H1 (cell line): ENCODE measurements at regions of chr14 and their contacts with region 1.

Region 1: DNA sequence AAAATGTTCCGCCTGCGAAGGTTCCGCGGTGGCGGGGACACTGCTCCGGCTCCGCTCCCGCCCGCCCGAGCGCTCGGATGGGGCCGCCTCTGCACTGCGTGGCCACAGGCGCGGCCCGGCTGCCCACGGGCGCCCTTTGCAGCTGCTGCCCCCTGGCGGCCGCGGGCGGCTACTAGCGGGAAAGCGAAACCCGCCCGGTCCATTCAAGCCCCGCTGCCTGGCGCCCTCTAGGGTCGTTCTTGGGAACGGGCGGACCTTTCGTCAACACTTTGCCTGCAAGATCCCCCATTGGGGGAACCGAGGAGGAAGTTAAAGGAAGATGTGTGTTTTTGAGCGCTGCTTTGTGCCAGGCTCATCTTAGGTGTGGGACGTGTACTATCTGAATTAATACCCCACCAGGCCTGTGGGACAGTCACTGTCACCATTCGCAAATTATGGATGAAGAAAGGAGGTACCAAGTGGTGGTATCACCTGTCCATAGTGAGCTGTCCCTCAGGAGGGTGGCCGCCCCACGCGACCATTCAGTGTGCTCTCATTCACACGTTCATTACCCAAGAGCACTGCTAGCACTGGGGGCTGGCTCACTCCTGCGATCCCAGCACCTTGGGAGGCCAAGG is 19.4 kb downstream of the GPR132 start:
- DNase-seq: peak in 1 of 2 experiments; percentile 98
- H3K4me3 ChIP-seq: no peak overlapping the region
- H3K27ac ChIP-seq: no peak overlapping the region
- H3K4me1 ChIP-seq: peaks cover 0 to 2% (median 0%) of the 10 kb centered on the region in 4 experiments; a peak in 1 of 7 replicates
- H3K27me3 ChIP-seq: peaks cover 0 to 8% (median 7%) of the 10 kb centered on the region in 4 experiments; a peak in 4 of 7 replicates
- CTCF ChIP-seq: peak; percentile 99 to 100 (median 99)
- EP300 ChIP-seq: peak in 1 of 2 experiments; percentile 39; a peak in 1 of 3 replicates
- POLR2A ChIP-seq: no peak
- RAD21 ChIP-seq: peak; percentile 89 to 98

Region 2: DNA sequence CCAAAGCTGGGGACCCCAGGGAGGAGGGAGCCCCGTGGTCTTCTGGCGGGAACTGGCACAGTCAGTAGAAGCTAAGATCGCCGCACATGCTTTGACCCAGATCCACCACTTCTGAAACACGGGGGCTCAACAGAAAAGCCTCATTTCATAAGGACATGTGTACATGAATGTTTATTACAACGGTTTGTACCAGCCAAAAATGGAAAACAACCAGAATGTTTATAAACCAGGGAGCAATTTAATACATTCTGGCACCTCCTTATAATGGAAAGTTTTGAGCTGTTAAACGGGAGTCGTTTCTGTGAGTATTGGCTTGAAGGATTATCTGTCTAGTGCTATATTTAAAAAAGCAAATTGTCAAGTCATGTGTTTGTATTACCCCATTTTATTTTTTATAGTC is 433.9 kb before region 1 on chr14:
- CTCF ChIA-PET with region 1: no interaction called
- POLR2A ChIA-PET with region 1: no interaction called
- DNase-seq: no peak
- H3K4me3 ChIP-seq: no peak overlapping the region
- H3K27ac ChIP-seq: no peak overlapping the region
- H3K4me1 ChIP-seq: no peaks in the 10 kb centered on the region
- H3K27me3 ChIP-seq: peaks cover 0 to 5% (median under 1%) of the 10 kb centered on the region in 4 experiments; a peak in 2 of 7 replicates
- CTCF ChIP-seq: no peak
- EP300 ChIP-seq: no peak
- POLR2A ChIP-seq: no peak
- RAD21 ChIP-seq: no peak

Region 3: DNA sequence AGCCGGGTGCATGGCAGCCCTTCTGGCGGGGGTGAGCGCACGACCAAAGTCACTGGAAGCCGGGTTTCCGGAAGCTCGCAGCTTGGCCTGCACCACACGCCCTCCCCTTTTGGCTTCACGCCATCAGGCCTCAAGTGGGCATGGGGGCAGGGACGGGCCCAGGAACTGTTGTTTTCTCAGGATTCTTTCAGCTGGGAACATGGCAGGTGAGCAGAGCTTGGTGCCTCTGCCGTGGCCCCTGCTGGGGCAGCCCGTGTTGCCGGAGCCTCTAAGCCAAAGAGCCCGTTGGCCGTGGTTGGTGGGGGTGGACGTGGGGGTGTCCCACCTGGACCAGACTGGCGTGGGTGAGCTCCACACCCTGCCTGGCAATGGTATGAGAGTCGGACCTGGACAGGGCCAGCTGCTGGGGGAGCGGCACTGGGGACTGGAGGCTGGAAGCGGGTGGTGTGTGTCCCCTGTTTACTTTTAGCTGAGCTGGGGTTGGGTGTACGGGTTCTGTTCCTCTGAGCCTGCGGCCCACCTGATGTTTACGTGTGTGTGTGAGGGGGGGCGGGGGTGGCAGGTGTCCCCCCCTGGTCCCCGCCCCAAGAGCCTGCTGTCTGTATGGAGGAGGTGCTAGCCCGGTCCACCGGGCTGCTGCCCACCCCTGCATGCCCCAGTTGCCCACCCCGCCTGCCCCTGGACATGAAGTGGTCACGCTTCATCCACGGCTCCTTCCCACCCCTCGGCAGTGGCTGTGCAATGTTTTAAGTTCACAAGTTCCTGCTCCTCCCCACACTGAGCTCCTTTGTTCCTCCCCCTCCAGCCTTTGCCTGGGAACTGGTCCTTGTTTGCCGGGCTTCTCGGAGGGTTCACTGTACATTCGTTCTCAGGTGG is 149.8 kb before region 1 on chr14:
- CTCF ChIA-PET with region 1: interaction called, 26 read pairs
- POLR2A ChIA-PET with region 1: no interaction called
- DNase-seq: peak in 1 of 2 experiments; percentile 46
- H3K4me3 ChIP-seq: no peak overlapping the region
- H3K27ac ChIP-seq: no peak overlapping the region
- H3K4me1 ChIP-seq: peaks cover 0 to 3% (median 0%) of the 10 kb centered on the region in 4 experiments; a peak in 1 of 7 replicates
- H3K27me3 ChIP-seq: no peaks in the 10 kb centered on the region
- CTCF ChIP-seq: no peak
- EP300 ChIP-seq: no peak
- POLR2A ChIP-seq: no peak
- RAD21 ChIP-seq: no peak

Region 4: GRCh38 chr14:104976198-104977007 is 69.4 kb before region 1 on chr14:
- CTCF ChIA-PET with region 1: interaction called, 161 read pairs
- POLR2A ChIA-PET with region 1: no interaction called
- DNase-seq: peak in 1 of 2 experiments; percentile 90
- H3K4me3 ChIP-seq: no peak overlapping the region
- H3K27ac ChIP-seq: no peak overlapping the region
- H3K4me1 ChIP-seq: peaks cover 0 to 11% (median 9%) of the 10 kb centered on the region in 4 experiments; a peak in 5 of 7 replicates
- H3K27me3 ChIP-seq: peaks cover 18 to 38% (median 31%) of the 10 kb centered on the region in 4 experiments
- CTCF ChIP-seq: peak in 2 of 3 experiments; percentile 85 to 93; a peak in 3 of 4 replicates
- EP300 ChIP-seq: no peak
- POLR2A ChIP-seq: no peak
- RAD21 ChIP-seq: peak; percentile 73 to 85

Region 5: GRCh38 chr14:104993808-104994591 is 51.8 kb before region 1 on chr14:
- CTCF ChIA-PET with region 1: interaction called, 22 read pairs
- POLR2A ChIA-PET with region 1: interaction called, 3 read pairs
- DNase-seq: no peak
- H3K4me3 ChIP-seq: no peak overlapping the region
- H3K27ac ChIP-seq: no peak overlapping the region
- H3K4me1 ChIP-seq: no peaks in the 10 kb centered on the region
- H3K27me3 ChIP-seq: 0 out of 7 replicates have a peak, but pooled peaks cover 0 to 2% (median 0%) of the 10 kb centered on the region in 4 experiments
- CTCF ChIP-seq: no peak
- EP300 ChIP-seq: no peak
- POLR2A ChIP-seq: no peak
- RAD21 ChIP-seq: no peak

Region 6: GRCh38 chr14:105034314-105035039 is 11.3 kb before region 1 on chr14:
- CTCF ChIA-PET with region 1: interaction called, 21 read pairs
- POLR2A ChIA-PET with region 1: no interaction called
- DNase-seq: no peak
- H3K4me3 ChIP-seq: peak overlapping the region in 1 of 4 experiments; percentile 59; a peak in 1 of 8 replicates
- H3K27ac ChIP-seq: no peak overlapping the region
- H3K4me1 ChIP-seq: peaks cover 0 to 2% (median 0%) of the 10 kb centered on the region in 4 experiments; a peak in 1 of 7 replicates
- H3K27me3 ChIP-seq: peaks cover 2 to 24% (median 18%) of the 10 kb centered on the region in 4 experiments
- CTCF ChIP-seq: no peak
- EP300 ChIP-seq: no peak
- POLR2A ChIP-seq: no peak
- RAD21 ChIP-seq: no peak

Region 7: DNA sequence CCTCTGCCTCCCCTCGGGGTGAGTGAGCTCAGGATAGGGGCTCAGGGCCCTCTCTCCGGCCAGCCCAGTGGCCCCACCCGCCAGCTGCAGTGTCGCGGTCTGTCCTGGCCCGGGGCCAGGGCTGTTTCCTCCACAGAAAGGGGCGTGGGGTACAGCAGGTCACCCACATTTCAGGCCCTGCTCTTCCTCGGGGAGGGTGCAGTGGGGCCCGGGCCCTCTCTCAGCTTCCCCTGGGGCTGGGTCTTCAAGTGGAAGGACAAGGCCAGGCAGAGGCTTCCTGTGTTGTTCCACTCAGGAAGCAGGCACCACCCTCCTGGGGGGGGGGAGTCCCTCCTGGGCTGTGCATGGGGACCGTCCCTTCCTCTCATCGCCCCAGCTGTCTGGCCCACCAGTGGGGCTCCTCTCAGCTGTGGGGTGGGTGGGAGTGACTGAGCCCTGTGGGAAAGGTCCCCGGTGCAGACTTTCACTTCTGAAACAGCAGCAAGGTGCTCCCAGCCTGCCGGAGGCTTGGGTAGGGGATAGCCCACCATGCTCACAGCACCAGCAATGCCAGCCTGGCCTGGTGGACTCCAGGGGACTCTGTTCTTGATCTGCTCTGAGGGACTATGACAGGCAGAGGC is 15.7 kb after region 1 on chr14:
- CTCF ChIA-PET with region 1: interaction called, 30 read pairs
- POLR2A ChIA-PET with region 1: no interaction called
- DNase-seq: no peak
- H3K4me3 ChIP-seq: no peak overlapping the region
- H3K27ac ChIP-seq: no peak overlapping the region
- H3K4me1 ChIP-seq: peaks cover 0 to 9% (median 6%) of the 10 kb centered on the region in 4 experiments; a peak in 4 of 7 replicates
- H3K27me3 ChIP-seq: peaks cover 0 to 8% (median 5%) of the 10 kb centered on the region in 4 experiments; a peak in 4 of 7 replicates
- CTCF ChIP-seq: no peak
- EP300 ChIP-seq: no peak
- POLR2A ChIP-seq: no peak
- RAD21 ChIP-seq: no peak

Region 8: DNA sequence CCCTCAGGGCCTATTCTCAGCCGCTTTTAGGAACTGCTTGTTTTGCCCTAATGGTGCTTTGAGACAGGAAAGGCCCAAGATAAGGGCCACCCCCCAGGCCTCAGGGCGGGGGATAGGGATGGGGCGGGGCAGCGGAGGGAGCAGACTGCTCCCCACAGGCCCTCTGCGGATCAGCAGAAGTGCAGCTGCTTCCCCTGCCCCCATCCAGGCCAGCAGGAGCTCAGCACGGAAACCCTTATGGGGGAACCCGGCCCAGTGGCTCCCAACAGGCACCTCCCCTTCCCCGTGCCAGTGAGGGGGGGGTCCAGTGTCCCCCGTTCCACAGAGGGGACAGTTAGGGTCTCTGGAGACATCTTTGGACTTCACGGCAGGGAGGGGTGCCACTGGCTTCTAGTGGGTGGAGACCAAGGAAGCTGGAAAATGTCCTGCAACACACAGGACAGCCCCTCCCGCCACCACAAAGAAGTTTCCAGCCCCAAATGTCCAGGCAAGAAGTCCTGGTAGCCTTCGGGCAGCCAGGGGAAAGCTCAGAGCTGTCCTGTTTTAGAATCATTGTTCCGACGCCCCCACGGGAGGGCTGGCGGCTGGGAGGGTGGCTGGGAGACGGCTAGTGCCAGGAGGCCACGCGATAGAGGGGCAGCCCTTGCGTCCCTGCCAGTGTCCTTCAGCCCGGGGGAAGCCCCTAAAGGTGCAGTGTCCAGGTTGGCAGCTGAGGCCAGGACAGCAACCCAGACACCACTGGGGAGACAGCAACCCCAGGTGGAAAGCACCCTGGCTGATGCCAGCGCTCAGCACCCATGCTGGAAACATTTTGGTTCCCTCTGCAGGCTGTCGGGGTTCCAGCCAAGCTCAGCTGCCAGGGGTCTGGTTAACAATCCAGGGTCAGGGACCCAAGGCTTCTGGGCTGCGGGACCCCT is 29.8 kb after region 1 on chr14:
- CTCF ChIA-PET with region 1: interaction called, 25 read pairs
- POLR2A ChIA-PET with region 1: no interaction called
- DNase-seq: no peak
- H3K4me3 ChIP-seq: peak overlapping the region in 1 of 4 experiments; percentile 30; a peak in 2 of 8 replicates
- H3K27ac ChIP-seq: no peak overlapping the region
- H3K4me1 ChIP-seq: peaks cover 0 to 14% (median 5%) of the 10 kb centered on the region in 4 experiments; a peak in 6 of 7 replicates
- H3K27me3 ChIP-seq: no peaks in the 10 kb centered on the region
- CTCF ChIP-seq: no peak
- EP300 ChIP-seq: no peak
- POLR2A ChIP-seq: no peak
- RAD21 ChIP-seq: no peak

Region 9: DNA sequence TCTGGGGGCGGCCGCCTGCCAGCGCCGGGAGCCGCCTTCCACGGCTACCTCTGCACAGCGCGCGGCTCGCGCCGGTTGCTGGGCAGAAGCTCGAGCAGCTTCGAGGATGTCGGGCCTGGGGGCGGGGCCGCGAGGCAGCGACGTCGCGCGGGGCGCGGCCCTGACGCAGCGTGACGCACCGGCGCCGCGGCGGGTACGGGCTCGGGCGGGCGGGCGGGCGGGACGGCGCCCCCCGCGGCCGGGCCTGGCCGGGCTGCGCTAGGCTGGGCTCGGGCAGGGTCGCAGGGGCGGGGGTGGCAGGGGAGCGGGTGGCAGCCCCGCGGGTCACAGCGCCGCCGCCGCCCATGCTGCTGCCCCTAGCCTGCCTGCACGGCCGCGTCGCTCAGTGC is 202.5 kb after region 1 on chr14 and contains the start of gene BTBD6:
- CTCF ChIA-PET with region 1: no interaction called
- POLR2A ChIA-PET with region 1: no interaction called
- DNase-seq: peak; percentile 33 to 84
- H3K4me3 ChIP-seq: peak within 1 kb of the TSS; percentile 37 to 66 (median 44)
- H3K27ac ChIP-seq: peak within 1 kb of the TSS; percentile 3; the same call in 1 of the 2 replicates
- H3K4me1 ChIP-seq: peaks cover 0 to 6% (median 2%) of the 10 kb centered on the region in 4 experiments; a peak in 3 of 7 replicates
- H3K27me3 ChIP-seq: peaks cover 0 to 7% (median 3%) of the 10 kb centered on the region in 4 experiments; a peak in 3 of 7 replicates
- CTCF ChIP-seq: no peak
- EP300 ChIP-seq: no peak
- POLR2A ChIP-seq: peak in 1 of 2 experiments; percentile 37; a peak in 1 of 3 replicates
- RAD21 ChIP-seq: no peak
- total RNA-seq, gene BTBD6: 10.2 and 11.6 TPM in 2 replicates